CD4-positive, alpha-beta memory T cell (primary cell): ENCODE measurements at regions of chr20 and their contacts with region 1.

Region 1: GRCh38 chr20:36808317-36809257 is 35.0 kb upstream of the DSN1 start:
- DNase-seq: peak; percentile 49 to 65 (median 59)
- H3K4me3 ChIP-seq: no peak overlapping the region
- H3K4me3 Mint-ChIP-seq: no peak overlapping the region
- H3K27ac ChIP-seq: no peak overlapping the region
- H3K27ac Mint-ChIP-seq: peak overlapping the region in 1 of 7 donors; percentile 56
- H3K4me1 ChIP-seq: no peaks in the 10 kb centered on the region
- H3K4me1 Mint-ChIP-seq: peaks cover 0 to 3% (median 0%) of the 10 kb centered on the region in 4 donors
- H3K27me3 ChIP-seq: no peaks in the 10 kb centered on the region
- H3K27me3 Mint-ChIP-seq: no peaks in the 10 kb centered on the region

Region 2: GRCh38 chr20:36214684-36215256 is 593.8 kb before region 1 on chr20:
- CTCF ChIA-PET with region 1: no interaction called
- POLR2A ChIA-PET with region 1: no interaction called
- intact Hi-C with region 1: no loop called
- DNase-seq: peak in 1 of 5 donors; percentile 10
- H3K4me3 ChIP-seq: no peak overlapping the region
- H3K4me3 Mint-ChIP-seq: no peak overlapping the region
- H3K27ac ChIP-seq: no peak overlapping the region
- H3K27ac Mint-ChIP-seq: no peak overlapping the region
- H3K4me1 ChIP-seq: no peaks in the 10 kb centered on the region
- H3K4me1 Mint-ChIP-seq: no peaks in the 10 kb centered on the region
- H3K27me3 ChIP-seq: no peaks in the 10 kb centered on the region
- H3K27me3 Mint-ChIP-seq: peaks cover 0 to 11% of the 10 kb centered on the region in 2 donors

Region 3: DNA sequence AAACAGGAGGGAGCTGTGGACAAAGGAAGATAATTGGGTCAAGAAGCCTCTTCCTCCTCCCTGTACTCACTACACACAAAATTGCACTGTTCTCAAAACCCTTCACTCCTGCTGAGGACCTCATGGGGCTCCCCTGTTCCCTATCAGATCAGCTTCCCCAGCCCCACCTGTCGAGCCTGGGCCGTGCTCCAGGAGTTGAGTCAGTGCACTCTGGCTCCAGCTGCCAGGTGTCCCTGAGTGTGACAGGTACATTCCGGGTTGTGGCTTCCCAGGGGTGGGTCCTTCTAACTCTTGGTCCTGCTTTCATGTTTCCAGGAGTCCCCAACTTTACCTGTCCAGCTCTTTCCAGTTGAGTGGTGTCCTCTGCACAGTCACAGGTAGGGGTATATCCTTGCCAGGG is 194.6 kb before region 1 on chr20:
- CTCF ChIA-PET with region 1: interaction called, 5 read pairs
- POLR2A ChIA-PET with region 1: interaction called, 3 read pairs
- intact Hi-C with region 1: loop called (anchors 2 kb)
- DNase-seq: no peak
- H3K4me3 ChIP-seq: no peak overlapping the region
- H3K4me3 Mint-ChIP-seq: no peak overlapping the region
- H3K27ac ChIP-seq: no peak overlapping the region
- H3K27ac Mint-ChIP-seq: peak overlapping the region in 6 of 7 donors; percentile 43 to 74 (median 58)
- H3K4me1 ChIP-seq: peaks cover 15% of the 10 kb centered on the region
- H3K4me1 Mint-ChIP-seq: peaks cover 8 to 15% (median 10%) of the 10 kb centered on the region in 4 donors
- H3K27me3 ChIP-seq: no peaks in the 10 kb centered on the region
- H3K27me3 Mint-ChIP-seq: no peaks in the 10 kb centered on the region

Region 4: GRCh38 chr20:36666181-36666740 is 142.3 kb before region 1 on chr20:
- CTCF ChIA-PET with region 1: interaction called, 10 read pairs
- POLR2A ChIA-PET with region 1: no interaction called
- intact Hi-C with region 1: no loop called
- DNase-seq: no peak
- H3K4me3 ChIP-seq: no peak overlapping the region
- H3K4me3 Mint-ChIP-seq: no peak overlapping the region
- H3K27ac ChIP-seq: no peak overlapping the region
- H3K27ac Mint-ChIP-seq: peak overlapping the region in 1 of 7 donors; percentile 27
- H3K4me1 ChIP-seq: no peaks in the 10 kb centered on the region
- H3K4me1 Mint-ChIP-seq: peaks cover 0 to 1% (median under 1%) of the 10 kb centered on the region in 4 donors
- H3K27me3 ChIP-seq: no peaks in the 10 kb centered on the region
- H3K27me3 Mint-ChIP-seq: no peaks in the 10 kb centered on the region

Region 5: GRCh38 chr20:36686944-36687343 is 121.6 kb before region 1 on chr20:
- CTCF ChIA-PET with region 1: no interaction called
- POLR2A ChIA-PET with region 1: no interaction called
- intact Hi-C with region 1: no loop called
- DNase-seq: no peak
- H3K4me3 ChIP-seq: no peak overlapping the region
- H3K4me3 Mint-ChIP-seq: no peak overlapping the region
- H3K27ac ChIP-seq: no peak overlapping the region
- H3K27ac Mint-ChIP-seq: peak overlapping the region in 1 of 7 donors; percentile 20
- H3K4me1 ChIP-seq: no peaks in the 10 kb centered on the region
- H3K4me1 Mint-ChIP-seq: no peaks in the 10 kb centered on the region
- H3K27me3 ChIP-seq: no peaks in the 10 kb centered on the region
- H3K27me3 Mint-ChIP-seq: no peaks in the 10 kb centered on the region

Region 6: GRCh38 chr20:36717657-36718056 is 90.9 kb before region 1 on chr20:
- CTCF ChIA-PET with region 1: interaction called, 6 read pairs
- POLR2A ChIA-PET with region 1: no interaction called
- intact Hi-C with region 1: loop called (anchors 1 kb)
- DNase-seq: peak in 4 of 5 donors; percentile 17 to 30 (median 22)
- H3K4me3 ChIP-seq: no peak overlapping the region
- H3K4me3 Mint-ChIP-seq: no peak overlapping the region
- H3K27ac ChIP-seq: no peak overlapping the region
- H3K27ac Mint-ChIP-seq: peak overlapping the region in 1 of 7 donors; percentile 8
- H3K4me1 ChIP-seq: no peaks in the 10 kb centered on the region
- H3K4me1 Mint-ChIP-seq: peaks cover 0 to 5% (median 4%) of the 10 kb centered on the region in 4 donors
- H3K27me3 ChIP-seq: no peaks in the 10 kb centered on the region
- H3K27me3 Mint-ChIP-seq: no peaks in the 10 kb centered on the region

Region 7: GRCh38 chr20:36796117-36796516 is 12.5 kb before region 1 on chr20:
- CTCF ChIA-PET with region 1: interaction called, 12 read pairs
- POLR2A ChIA-PET with region 1: no interaction called
- intact Hi-C with region 1: no loop called
- DNase-seq: no peak
- H3K4me3 ChIP-seq: no peak overlapping the region
- H3K4me3 Mint-ChIP-seq: no peak overlapping the region
- H3K27ac ChIP-seq: no peak overlapping the region
- H3K27ac Mint-ChIP-seq: no peak overlapping the region
- H3K4me1 ChIP-seq: no peaks in the 10 kb centered on the region
- H3K4me1 Mint-ChIP-seq: no peaks in the 10 kb centered on the region
- H3K27me3 ChIP-seq: no peaks in the 10 kb centered on the region
- H3K27me3 Mint-ChIP-seq: peaks cover 0 to 1% of the 10 kb centered on the region in 2 donors

Region 8: GRCh38 chr20:36819659-36820058 is 11.1 kb after region 1 on chr20:
- CTCF ChIA-PET with region 1: interaction called, 15 read pairs
- POLR2A ChIA-PET with region 1: no interaction called
- intact Hi-C with region 1: no loop called
- DNase-seq: no peak
- H3K4me3 ChIP-seq: no peak overlapping the region
- H3K4me3 Mint-ChIP-seq: no peak overlapping the region
- H3K27ac ChIP-seq: no peak overlapping the region
- H3K27ac Mint-ChIP-seq: no peak overlapping the region
- H3K4me1 ChIP-seq: no peaks in the 10 kb centered on the region
- H3K4me1 Mint-ChIP-seq: no peaks in the 10 kb centered on the region
- H3K27me3 ChIP-seq: no peaks in the 10 kb centered on the region
- H3K27me3 Mint-ChIP-seq: peaks cover 0 to 3% of the 10 kb centered on the region in 2 donors

Region 9: GRCh38 chr20:36835453-36836198 is 27.0 kb after region 1 on chr20:
- CTCF ChIA-PET with region 1: interaction called, 11 read pairs
- POLR2A ChIA-PET with region 1: no interaction called
- intact Hi-C with region 1: no loop called
- DNase-seq: peak; percentile 69 to 81 (median 74)
- H3K4me3 ChIP-seq: peak overlapping the region in 1 of 2 donors; percentile 63
- H3K4me3 Mint-ChIP-seq: peak overlapping the region; percentile 67 to 84 (median 80)
- H3K27ac ChIP-seq: peak overlapping the region; percentile 15
- H3K27ac Mint-ChIP-seq: peak overlapping the region in 5 of 7 donors; percentile 30 to 81 (median 57)
- H3K4me1 ChIP-seq: peaks cover 7% of the 10 kb centered on the region
- H3K4me1 Mint-ChIP-seq: peaks cover 1 to 14% (median 5%) of the 10 kb centered on the region in 4 donors
- H3K27me3 ChIP-seq: no peaks in the 10 kb centered on the region
- H3K27me3 Mint-ChIP-seq: no peaks in the 10 kb centered on the region